AG04450 (cell line): ENCODE measurements at regions of chr6 and their contacts with region 1.

Region 1: DNA sequence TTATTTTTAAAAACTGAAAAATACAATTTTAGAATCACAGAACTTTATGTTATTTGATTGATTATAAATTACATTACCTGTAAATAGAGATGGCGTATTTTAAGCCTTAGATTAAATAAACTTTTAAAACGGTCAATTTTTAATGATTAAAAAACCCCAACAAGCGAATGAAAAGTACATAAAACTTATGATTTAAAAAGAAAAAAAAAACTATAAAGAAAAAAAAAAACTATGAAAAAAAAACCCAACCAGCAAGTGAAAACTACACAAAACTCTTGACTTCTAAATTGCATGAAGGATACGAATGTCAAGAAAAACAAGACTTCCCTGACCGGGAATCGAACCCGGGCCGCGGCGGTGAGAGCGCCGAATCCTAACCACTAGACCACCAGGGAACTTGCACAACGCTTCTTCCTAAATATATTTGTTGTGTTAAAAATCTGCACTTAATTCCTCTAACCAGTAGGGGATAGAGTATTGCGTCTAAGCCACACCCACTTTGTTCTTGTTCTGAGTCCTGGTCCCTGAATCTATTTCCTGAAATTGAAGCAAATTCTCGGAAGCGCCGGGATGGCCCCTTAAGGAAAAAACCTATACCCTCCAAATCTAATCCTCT is 10.7 kb upstream of the NCOA7 start:
- DNase-seq: peak; percentile 79
- H3K4me3 ChIP-seq: peak overlapping the region; percentile 68
- H3K27ac ChIP-seq: peak overlapping the region; percentile 88
- H3K27me3 ChIP-seq: no peaks in the 10 kb centered on the region
- CTCF ChIP-seq: peak; percentile 28; the same call in 1 of the 2 replicates

Region 2: DNA sequence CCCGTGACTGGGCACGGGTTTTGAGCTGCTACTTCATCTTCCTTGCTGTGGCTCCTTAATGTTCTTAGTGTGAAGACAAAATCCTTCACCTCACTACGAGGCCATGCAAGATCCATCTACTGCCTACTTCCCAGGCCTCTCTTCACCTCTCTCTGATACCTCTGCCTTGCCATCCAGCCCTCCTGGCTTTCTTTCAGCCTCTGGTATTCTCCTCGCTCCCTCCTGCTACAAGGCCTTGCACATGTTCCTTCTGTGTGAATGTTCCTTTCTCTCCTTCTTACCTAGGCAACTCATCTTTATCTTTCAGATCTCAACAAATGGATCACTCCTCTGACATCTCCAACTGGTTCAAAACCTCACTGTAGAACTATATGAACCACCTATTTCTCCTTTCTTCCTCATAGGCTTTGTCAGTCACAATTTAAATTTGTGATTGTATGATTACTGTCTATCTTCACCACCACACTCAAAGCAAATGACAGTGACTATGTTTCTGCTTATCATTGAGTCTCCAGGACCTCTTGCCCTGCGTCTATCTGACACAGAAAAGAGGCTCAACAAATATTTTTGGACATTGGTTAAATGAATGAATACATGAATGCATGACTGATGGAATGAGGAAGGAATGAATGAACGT is 10.8 kb before region 1 on chr6:
- CTCF ChIA-PET with region 1: interaction called, 11 read pairs
- POLR2A ChIA-PET with region 1: no interaction called
- DNase-seq: no peak
- H3K4me3 ChIP-seq: no peak overlapping the region
- H3K27ac ChIP-seq: no peak overlapping the region
- H3K27me3 ChIP-seq: peaks cover 8% of the 10 kb centered on the region
- CTCF ChIP-seq: no peak

Region 3: DNA sequence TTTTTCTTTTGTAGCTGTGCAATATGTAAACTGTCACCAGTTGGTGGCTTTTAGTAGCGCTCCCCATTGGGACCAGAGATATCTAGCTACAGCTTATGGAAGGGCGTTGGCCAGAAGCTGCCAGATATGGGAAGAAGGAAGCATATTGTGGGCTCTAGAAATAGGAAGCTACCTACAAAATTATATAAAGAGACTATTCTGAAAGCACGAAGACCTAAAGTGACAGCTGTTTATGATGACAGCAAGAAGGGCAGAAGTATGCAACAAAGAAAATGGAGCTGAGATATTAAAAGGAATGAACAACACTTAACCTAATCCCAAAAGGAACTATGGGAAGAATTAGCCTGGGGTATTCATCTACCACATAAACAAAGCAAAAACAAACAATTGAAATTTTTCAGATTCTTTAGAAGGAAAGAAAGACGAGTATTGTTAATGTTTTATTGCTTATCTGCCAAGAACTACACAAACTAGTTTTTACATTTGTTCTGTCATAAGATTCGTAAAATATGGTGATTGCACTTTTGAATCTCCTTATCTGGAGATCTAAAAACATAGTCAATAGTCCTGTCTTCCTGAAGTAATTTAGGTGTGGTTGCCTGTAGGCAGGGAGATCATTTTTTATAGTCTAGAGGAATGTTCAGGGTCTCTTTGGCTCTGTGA is 92.4 kb after region 1 on chr6:
- CTCF ChIA-PET with region 1: no interaction called
- POLR2A ChIA-PET with region 1: no interaction called
- DNase-seq: no peak
- H3K4me3 ChIP-seq: no peak overlapping the region
- H3K27ac ChIP-seq: no peak overlapping the region
- H3K27me3 ChIP-seq: no peaks in the 10 kb centered on the region
- CTCF ChIP-seq: no peak